A549 (cell line): ENCODE measurements at regions of chr19 and their contacts with region 1.

Region 1: GRCh38 chr19:44212250-44212865 is at the start of gene ZNF227:
- DNase-seq: peak; percentile 86 to 98
- ATAC-seq: peak; percentile 98 to 99
- H3K4me3 ChIP-seq: peak within 1 kb of the TSS; percentile 77
- H3K27ac ChIP-seq: peak within 1 kb of the TSS; percentile 81 to 90
- H3K4me1 ChIP-seq: peaks cover 7% of the 10 kb centered on the region
- CTCF ChIP-seq: no peak
- EP300 ChIP-seq: no peak
- POLR2A ChIP-seq: peak; percentile 70
- RAD21 ChIP-seq: no peak
- polyA plus RNA-seq, gene ZNF227: 15.8 and 17.1 TPM in 2 replicates

Region 2: DNA sequence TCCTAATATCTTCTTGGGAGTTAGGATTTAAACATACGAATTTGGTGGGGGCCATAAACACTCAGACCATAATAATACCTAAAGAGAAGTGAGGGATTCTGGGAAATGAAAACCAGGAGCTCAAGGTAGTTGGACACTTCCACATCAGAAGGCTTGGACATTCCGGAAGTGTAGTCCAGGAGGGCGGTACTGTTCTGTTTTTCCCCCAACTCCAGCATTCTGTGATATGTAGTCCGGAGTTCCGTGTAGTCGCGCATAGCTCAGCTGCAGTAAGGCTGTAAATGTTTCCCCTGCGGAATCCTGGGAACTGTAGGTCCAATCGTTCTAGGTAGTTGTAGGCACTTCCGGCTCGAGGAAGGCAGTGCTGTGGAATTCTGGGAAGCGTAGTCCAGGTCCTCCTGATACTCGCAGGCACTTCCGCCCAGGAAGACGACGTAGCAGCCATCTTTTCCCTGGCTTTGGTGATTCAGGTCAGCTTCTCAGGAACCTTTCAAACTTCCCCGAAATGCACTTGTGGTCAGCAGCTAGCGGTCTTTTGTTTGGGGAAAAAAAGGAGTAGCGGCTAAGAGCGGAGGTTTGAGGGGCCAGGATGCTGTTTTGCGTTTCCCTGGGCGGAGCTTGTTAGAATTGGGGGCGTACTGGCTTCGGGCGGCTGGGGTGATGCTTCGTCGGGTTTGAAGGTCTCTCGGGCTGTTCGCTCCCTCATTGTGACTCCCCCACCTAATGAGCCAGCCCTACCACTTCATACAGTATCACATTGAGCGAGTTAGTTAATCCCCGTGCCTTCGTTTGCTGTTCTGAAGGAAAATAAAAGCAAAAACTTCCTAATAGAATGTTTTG is 47.5 kb before region 1 on chr19 and contains the start of gene ZNF226:
- CTCF ChIA-PET with region 1: no interaction called
- POLR2A ChIA-PET with region 1: interaction called, 27 read pairs
- DNase-seq: peak; percentile 98 to 100
- ATAC-seq: peak; percentile 99
- H3K4me3 ChIP-seq: peak within 1 kb of the TSS; percentile 71
- H3K27ac ChIP-seq: peak within 1 kb of the TSS; percentile 81 to 89
- H3K4me1 ChIP-seq: 0 out of 3 replicates have a peak, but pooled peaks cover 4% of the 10 kb centered on the region
- CTCF ChIP-seq: no peak
- EP300 ChIP-seq: no peak
- POLR2A ChIP-seq: peak; percentile 41
- RAD21 ChIP-seq: no peak
- polyA plus RNA-seq, gene ZNF226: 46.3 and 53.2 TPM in 2 replicates